Cardiac septum (tissue), 1 donor: ENCODE measurements at regions of chr4 and their contacts with region 1.

Region 1: DNA sequence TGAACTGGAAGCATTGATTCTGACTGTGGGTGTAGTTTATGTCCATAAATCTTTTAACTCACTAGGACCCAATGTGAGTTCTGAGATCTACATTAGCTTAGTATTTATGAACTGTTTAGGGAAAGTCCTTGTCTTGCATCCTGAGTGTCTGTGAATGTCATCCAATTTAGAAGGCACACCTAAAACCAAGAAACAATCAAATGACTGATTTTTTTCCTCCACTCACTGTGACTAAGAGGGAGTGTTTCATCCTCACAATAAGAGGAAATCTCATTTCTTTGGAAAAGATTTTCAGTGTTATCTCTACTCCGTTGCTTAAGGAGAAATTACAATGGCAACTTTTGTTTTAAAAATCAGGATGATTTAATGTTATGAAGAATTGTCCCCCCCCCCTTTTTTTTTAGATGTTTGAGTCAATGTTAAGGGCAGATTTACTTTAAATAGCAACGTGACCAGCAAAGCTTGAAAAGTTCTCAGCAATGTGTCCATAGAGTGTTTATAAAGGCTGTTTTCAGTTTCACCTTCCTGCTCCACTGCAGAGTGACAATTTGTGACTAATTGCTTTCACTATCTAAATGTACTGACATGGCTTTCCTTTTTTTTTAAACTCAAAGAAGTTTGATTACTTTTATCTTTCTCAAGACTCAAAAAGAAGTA is 173.0 kb downstream of the SPCS3 start:
- DNase-seq: no peak

Region 2: DNA sequence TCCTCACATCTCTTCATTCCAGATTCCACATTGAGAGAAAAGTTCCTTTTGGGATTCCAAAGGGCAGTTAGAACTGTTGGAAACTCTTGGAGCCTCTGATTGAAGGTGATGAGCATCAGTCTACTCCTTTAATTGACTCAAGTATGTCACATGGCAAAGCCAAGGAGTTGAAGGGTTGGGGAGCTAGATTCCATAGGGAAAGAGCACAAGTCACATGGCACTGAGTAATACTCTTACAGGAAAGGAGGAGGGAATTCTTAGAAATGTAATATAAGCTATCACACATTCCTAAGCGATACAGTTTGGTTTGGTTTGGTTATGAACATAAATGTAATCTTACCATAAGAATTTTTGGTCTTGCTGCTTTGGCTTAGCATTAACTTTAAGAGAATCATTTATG is 157.4 kb before region 1 on chr4:
- intact Hi-C with region 1: no loop called
- DNase-seq: no peak

Region 3: GRCh38 chr4:176383273-176384077 is 109.3 kb before region 1 on chr4:
- intact Hi-C with region 1: loop called (anchors 1 kb)
- DNase-seq: no peak

Region 4: GRCh38 chr4:176538217-176538925 is 45.6 kb after region 1 on chr4:
- intact Hi-C with region 1: loop called (anchors 5 kb)
- DNase-seq: no peak

Region 5: DNA sequence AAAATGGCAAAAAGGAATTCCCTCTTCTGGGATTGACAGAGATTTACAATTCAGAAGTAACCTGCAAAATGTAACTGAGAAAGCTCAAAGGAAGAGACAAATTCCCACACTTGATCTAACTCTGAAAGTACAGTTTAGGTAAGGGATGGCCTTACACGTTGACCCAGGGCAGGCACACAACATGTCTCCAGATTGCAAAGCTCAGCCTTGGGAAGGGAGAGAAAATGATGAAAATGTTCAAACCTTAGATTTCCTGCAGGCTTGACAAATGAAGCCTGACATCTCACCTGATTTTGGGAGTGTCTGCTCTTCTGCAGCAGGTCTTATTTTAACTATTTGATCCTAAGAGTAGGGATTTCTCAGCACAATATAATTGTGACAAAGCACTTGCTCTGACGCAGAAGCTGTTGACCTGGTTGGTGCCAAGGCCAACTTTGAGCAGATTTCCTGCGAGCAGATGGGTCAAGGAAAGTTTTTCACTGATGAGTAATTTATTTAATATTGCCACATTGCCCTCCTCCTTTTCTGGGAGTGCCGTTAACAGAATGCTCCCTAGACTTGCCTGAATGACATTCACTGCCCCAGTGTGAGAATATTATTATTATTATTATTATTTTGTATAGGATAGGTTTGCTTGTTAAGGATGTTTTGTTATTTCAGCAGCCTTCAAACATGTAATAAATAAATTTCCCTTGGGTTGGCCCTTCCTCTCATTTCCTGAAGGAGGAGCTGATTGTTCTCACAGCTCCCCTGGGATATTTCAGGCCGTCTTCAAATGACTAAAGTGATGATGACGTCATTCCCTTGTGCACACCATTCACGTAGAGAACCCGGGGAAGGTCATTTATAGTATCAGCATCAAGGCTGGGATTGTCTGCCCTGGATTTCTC is 142.8 kb after region 1 on chr4:
- intact Hi-C with region 1: loop called (anchors 10 kb)
- DNase-seq: no peak